ENCODE measurements at regions of chr2 and their contacts with region 1.

Region 1: GRCh38 chr2:26421956-26422355 is 20.2 kb downstream of the DRC1 start:
- DNase-seq: no peak
- H3K4me3 ChIP-seq: no peak overlapping the region
- H3K27ac ChIP-seq: no peak overlapping the region
- H3K4me1 ChIP-seq: no peaks in the 10 kb centered on the region
- CTCF ChIP-seq: no peak

Region 2: GRCh38 chr2:26363323-26363722 is 58.6 kb before region 1 on chr2:
- CTCF ChIA-PET with region 1: no interaction called
- POLR2A ChIA-PET with region 1: no interaction called
- intact Hi-C with region 1: no loop called
- DNase-seq: no peak
- H3K4me3 ChIP-seq: no peak overlapping the region
- H3K27ac ChIP-seq: no peak overlapping the region
- H3K4me1 ChIP-seq: no peaks in the 10 kb centered on the region
- CTCF ChIP-seq: no peak

Region 3: DNA sequence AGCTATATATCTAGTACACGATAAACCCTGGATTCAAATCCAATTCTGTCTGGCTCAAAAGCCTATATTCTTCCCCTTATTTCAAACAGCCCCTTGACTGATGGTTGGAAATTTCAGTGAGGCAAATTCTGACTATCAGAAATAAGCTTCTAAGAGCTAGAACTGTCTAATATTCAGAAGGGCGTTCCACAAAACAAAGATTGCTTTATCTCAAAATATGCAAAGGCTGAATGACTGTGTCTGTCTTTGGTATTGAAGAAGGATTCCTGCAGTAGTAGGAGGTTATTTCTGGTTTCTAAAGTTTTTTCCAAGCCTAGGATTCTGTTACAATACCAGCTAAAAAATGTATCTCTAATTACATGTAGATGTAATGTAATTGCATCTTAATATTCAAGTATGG is 10.9 kb after region 1 on chr2:
- CTCF ChIA-PET with region 1: no interaction called
- POLR2A ChIA-PET with region 1: interaction called, 16 read pairs
- intact Hi-C with region 1: no loop called
- DNase-seq: no peak
- H3K4me3 ChIP-seq: no peak overlapping the region
- H3K27ac ChIP-seq: no peak overlapping the region
- H3K4me1 ChIP-seq: peaks cover 7% of the 10 kb centered on the region
- CTCF ChIP-seq: no peak